ENCODE measurements at regions of chr3 and their contacts with region 1.

Region 1: GRCh38 chr3:8324740-8325139 is 176.9 kb upstream of the LMCD1 start:
- DNase-seq: peak; percentile 67 to 80
- ATAC-seq: peak; percentile 90 to 95 (median 91)
- H3K4me3 ChIP-seq: no peak overlapping the region
- H3K4me3 Mint-ChIP-seq: no peak overlapping the region
- H3K27ac ChIP-seq: no peak overlapping the region
- H3K27ac Mint-ChIP-seq: peak overlapping the region in 1 of 2 donors; percentile 58
- H3K4me1 ChIP-seq: peaks cover 13% of the 10 kb centered on the region
- H3K4me1 Mint-ChIP-seq: peaks cover 33 to 38% of the 10 kb centered on the region in 2 donors
- H3K27me3 ChIP-seq: no peaks in the 10 kb centered on the region
- H3K27me3 Mint-ChIP-seq: no peaks in the 10 kb centered on the region
- CTCF ChIP-seq: peak; percentile 77

Region 2: DNA sequence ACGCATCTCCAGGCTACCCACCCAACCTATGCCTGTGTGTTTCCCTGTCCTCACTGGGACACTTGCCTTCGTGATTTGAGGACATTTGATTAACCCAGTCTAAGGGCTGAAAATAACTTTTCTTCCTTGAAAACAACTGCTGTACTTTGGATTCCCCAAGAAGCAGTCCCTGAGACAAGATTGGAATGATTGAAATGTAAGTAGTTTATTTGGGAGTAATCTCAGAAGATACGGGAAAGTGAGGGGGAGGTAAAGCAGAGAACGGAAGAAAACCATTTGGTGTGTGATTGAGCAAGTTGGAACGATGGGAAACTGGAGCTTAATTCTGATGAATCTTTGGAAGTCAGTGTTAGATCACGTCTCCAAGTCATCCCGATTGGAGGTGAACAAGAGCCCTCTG is 33.1 kb after region 1 on chr3:
- intact Hi-C with region 1: loop called (anchors 1 kb)
- DNase-seq: no peak
- ATAC-seq: no peak
- H3K4me3 ChIP-seq: no peak overlapping the region
- H3K4me3 Mint-ChIP-seq: peak overlapping the region; percentile 75
- H3K27ac ChIP-seq: peak overlapping the region; percentile 95
- H3K27ac Mint-ChIP-seq: peak overlapping the region; percentile 99
- H3K4me1 ChIP-seq: peaks cover 32% of the 10 kb centered on the region
- H3K4me1 Mint-ChIP-seq: peaks cover 83 to 85% of the 10 kb centered on the region in 2 donors
- H3K27me3 ChIP-seq: no peaks in the 10 kb centered on the region
- H3K27me3 Mint-ChIP-seq: no peaks in the 10 kb centered on the region
- CTCF ChIP-seq: no peak

Region 3: GRCh38 chr3:8416965-8417364 is 92.2 kb after region 1 on chr3:
- intact Hi-C with region 1: loop called (anchors 1 kb)
- DNase-seq: peak in 1 of 2 donors; percentile 11
- ATAC-seq: peak in 1 of 3 donors; percentile 39
- H3K4me3 ChIP-seq: no peak overlapping the region
- H3K4me3 Mint-ChIP-seq: no peak overlapping the region
- H3K27ac ChIP-seq: no peak overlapping the region
- H3K27ac Mint-ChIP-seq: peak overlapping the region; percentile 39 to 46
- H3K4me1 ChIP-seq: peaks cover 4% of the 10 kb centered on the region
- H3K4me1 Mint-ChIP-seq: peaks cover 12 to 14% of the 10 kb centered on the region in 2 donors
- H3K27me3 ChIP-seq: no peaks in the 10 kb centered on the region
- H3K27me3 Mint-ChIP-seq: peaks cover 0 to 6% of the 10 kb centered on the region in 2 donors
- CTCF ChIP-seq: no peak

Region 4: GRCh38 chr3:8970971-8971589 is 646.3 kb after region 1 on chr3:
- intact Hi-C with region 1: no loop called
- DNase-seq: peak; percentile 63 to 88
- ATAC-seq: peak; percentile 85 to 95 (median 92)
- H3K4me3 ChIP-seq: no peak overlapping the region
- H3K4me3 Mint-ChIP-seq: no peak overlapping the region
- H3K27ac ChIP-seq: no peak overlapping the region
- H3K27ac Mint-ChIP-seq: no peak overlapping the region
- H3K4me1 ChIP-seq: peaks cover 5% of the 10 kb centered on the region
- H3K4me1 Mint-ChIP-seq: peaks cover 5% of the 10 kb centered on the region in 2 donors
- H3K27me3 ChIP-seq: peaks cover 3% of the 10 kb centered on the region
- H3K27me3 Mint-ChIP-seq: peaks cover 16 to 32% of the 10 kb centered on the region in 2 donors
- CTCF ChIP-seq: peak; percentile 99

Measured in natural killer cell (primary cell).